ENCODE measurements at regions of chr2 and their contacts with region 1.

Region 1: DNA sequence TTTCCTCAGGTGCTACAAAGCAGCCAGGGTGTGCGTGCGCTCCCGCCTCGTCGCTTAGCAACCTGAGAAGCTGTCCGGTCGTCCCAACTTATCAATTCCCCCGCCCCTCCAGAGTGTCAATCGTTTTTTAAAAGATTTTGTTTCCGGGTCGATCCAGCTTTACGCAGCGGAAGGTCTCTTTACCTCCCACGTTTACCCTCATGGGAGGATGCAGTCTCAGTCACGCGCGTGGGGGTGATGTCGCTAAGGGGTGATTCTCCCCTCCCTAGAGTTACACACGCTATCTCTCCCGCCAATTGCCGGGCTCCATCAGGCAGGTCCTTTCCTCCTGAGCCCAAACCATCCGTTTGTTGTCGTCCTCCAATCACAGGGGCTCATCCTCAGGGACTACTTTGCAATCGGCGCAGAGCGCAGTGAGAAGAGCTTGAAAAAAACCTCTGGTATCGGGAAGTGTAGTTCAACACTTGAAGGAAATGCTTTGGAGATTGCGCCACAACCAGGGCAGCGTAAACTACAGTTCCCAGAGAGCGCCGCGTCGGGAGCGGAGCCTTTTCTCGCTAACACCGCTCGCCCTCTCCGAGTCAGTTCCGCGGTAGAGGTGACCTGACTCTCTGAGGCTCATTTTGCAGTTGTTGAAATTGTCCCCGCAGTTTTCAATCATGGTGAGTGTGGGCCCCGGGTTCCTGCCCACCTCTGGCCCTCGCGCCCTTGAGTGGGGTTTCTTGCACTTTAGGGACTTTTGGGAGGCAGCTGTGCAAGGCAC is at the starts of genes MDH1 and WDPCP:
- DNase-seq: peak; percentile 95
- H3K4me3 Mint-ChIP-seq: peak within 1 kb of the TSS; percentile 99
- H3K27ac Mint-ChIP-seq: peak within 1 kb of the TSS; percentile 94
- H3K4me1 Mint-ChIP-seq: peaks cover 31% of the 10 kb centered on the region
- H3K27me3 Mint-ChIP-seq: no peaks in the 10 kb centered on the region
- total RNA-seq, gene MDH1: 269 to 275 TPM
- total RNA-seq, gene WDPCP: 5.6 to 5.7 TPM

Region 2: DNA sequence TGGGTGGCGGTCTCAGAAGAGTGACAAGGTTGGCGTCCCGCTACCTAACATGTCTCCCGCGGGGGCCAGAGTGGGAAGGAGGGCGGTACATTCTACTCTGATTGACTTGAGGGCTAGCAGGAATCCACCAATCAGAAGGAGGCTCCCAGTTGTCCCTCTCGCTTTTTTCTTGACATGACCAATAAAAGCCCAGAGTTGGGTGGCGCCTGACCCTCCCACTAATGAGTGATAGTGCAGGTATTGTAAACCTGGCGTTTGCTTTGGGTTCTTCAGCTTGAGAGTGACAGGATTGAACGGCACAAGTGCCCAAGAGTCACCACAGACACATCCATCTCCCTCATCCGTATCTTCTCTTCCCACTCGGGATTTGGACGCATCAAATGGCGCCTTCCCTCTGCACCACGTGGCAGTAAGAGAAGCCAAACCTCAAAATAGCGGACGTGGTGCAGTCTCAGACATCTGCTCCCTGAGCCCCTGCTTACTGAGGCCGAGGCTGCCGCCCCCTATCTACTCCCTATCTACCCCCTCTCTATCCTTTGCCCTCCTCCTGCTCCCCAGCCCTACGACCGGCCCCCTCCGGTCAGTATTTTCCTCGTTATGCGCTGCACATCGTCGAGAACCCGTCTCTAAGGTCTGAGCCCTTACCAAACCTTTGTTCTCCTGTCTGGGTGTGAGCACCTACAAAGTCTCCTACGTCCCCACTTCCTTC is 1733.9 kb before region 1 on chr2:
- CTCF ChIA-PET with region 1: no interaction called
- intact Hi-C with region 1: loop called (anchors 1 kb)
- DNase-seq: peak; percentile 95
- H3K4me3 Mint-ChIP-seq: peak overlapping the region; percentile 93
- H3K27ac Mint-ChIP-seq: peak overlapping the region; percentile 91
- H3K4me1 Mint-ChIP-seq: peaks cover 17% of the 10 kb centered on the region
- H3K27me3 Mint-ChIP-seq: no peaks in the 10 kb centered on the region

Region 3: DNA sequence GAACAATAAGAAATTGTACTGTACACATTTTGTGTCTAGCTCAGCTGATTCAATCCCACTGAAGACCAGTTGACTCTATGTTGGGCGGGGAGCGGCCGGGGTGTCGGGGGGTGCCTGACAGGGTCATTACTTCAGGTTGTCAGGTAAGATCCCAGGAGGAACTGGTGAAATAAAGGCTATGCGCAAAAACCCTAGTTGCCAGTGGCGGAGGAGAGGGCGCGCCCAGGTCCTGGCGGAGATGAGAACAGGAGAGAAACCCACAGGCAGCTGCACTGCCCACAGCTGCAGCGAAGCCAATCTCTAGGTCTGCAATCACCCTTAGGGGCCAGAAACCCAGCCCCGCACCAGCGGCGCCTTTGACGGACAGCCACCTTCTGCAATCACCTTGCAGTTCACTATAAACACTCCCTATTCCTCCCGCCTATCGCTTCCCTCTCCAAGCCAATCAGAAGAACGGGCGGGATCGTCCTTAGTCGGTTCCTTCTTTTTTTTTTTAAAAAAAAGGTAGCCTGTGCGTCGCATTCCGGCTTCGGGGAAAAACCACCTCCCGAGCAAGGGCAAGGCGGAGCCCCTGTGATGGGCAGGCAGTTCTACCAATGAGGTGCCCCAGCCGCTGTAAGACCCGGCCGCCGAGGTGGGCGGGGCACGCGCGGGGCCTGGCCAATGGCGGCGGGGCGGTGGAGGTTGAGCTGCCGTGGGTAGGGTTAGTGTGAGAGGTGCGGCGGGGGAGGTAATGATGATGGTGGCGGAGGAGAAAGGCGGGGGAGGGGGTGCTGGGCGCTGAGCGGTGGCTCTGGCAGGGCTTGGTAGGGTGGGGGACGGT is 883.3 kb before region 1 on chr2 and contains the start of gene EHBP1:
- CTCF ChIA-PET with region 1: no interaction called
- intact Hi-C with region 1: loop called (anchors 1 kb)
- DNase-seq: peak; percentile 98
- H3K4me3 Mint-ChIP-seq: peak within 1 kb of the TSS; percentile 90
- H3K27ac Mint-ChIP-seq: peak within 1 kb of the TSS; percentile 76
- H3K4me1 Mint-ChIP-seq: peaks cover 27% of the 10 kb centered on the region
- H3K27me3 Mint-ChIP-seq: no peaks in the 10 kb centered on the region
- total RNA-seq, gene EHBP1: 17.4 to 17.5 TPM

Region 4: DNA sequence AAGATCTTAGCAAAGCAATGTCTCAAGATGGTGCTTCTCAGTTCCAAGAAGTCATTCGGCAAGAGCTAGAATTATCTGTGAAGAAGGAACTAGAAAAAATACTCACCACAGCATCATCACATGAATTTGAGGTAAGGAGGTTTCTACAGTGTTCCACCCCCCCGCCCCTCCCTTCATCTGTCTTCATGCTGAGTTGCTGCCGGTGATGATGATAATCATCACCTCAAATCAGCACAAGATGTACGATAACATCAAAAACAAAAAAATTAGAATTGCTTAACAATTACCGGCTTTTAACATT is 267.7 kb after region 1 on chr2:
- CTCF ChIA-PET with region 1: interaction called, 7 read pairs
- intact Hi-C with region 1: loop called (anchors 1 kb)
- DNase-seq: peak; percentile 67
- H3K4me3 Mint-ChIP-seq: peak overlapping the region; percentile 22
- H3K27ac Mint-ChIP-seq: peak overlapping the region; percentile 80
- H3K4me1 Mint-ChIP-seq: peaks cover 50% of the 10 kb centered on the region
- H3K27me3 Mint-ChIP-seq: no peaks in the 10 kb centered on the region

Region 5: DNA sequence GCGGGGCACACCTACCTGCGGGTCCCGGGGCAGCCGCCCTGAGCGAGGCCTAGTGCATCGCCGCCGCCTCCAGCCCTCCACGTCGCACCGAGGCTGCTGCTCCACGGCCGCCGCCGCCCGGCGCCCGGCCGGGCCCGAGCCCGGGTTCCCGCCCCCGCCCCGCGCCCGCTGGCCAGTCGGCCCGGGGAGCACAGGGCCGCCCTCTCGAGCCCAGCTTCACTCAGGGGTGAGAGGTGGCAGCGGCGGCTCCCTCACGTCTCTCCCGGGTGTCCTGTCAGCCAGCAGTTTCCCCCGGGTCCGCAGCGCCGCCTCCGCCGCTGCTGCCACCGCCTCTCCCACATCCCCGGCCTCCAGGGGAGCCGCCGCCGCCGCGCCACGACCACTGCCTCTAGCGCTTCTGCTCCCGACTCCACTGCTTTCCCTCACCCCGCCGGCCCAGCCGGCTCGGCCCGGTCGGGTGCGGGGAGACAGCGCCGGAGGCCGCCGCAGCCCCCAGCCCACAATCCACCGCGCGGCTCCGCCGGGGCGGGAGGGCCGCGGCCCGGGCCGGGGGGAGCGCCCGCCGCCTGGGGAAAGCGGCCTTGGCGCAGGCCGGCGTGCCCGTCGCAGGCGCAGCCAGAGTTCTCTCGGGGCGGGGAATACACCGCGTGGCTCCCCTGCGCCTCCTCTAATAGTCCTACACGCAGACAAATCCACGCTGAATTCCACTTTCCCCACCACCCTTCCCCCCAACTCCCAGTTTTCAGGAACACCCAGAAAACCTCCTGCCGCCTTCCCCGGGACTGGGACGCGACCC is 430.6 kb after region 1 on chr2 and contains the start of gene VPS54:
- CTCF ChIA-PET with region 1: no interaction called
- intact Hi-C with region 1: loop called (anchors 1 kb)
- DNase-seq: peak; percentile 52
- H3K4me3 Mint-ChIP-seq: peak within 1 kb of the TSS; percentile 95
- H3K27ac Mint-ChIP-seq: peak within 1 kb of the TSS; percentile 95
- H3K4me1 Mint-ChIP-seq: peaks cover 34% of the 10 kb centered on the region
- H3K27me3 Mint-ChIP-seq: no peaks in the 10 kb centered on the region
- total RNA-seq, gene VPS54: 7.0 to 7.7 TPM

Region 6: GRCh38 chr2:65056215-65057053 is 1467.9 kb after region 1 on chr2 and contains the start of gene CEP68:
- CTCF ChIA-PET with region 1: no interaction called
- intact Hi-C with region 1: loop called (anchors 2 kb)
- DNase-seq: peak; percentile 98
- H3K4me3 Mint-ChIP-seq: peak within 1 kb of the TSS; percentile 93
- H3K27ac Mint-ChIP-seq: peak within 1 kb of the TSS; percentile 67
- H3K4me1 Mint-ChIP-seq: peaks cover 51% of the 10 kb centered on the region
- H3K27me3 Mint-ChIP-seq: no peaks in the 10 kb centered on the region
- total RNA-seq, gene CEP68: 6.0 to 7.3 TPM

Measured in activated naive CD4-positive, alpha-beta T cell treated with anti-CD3 and anti-CD28 coated beads for 36 hours (primary cell).